Activated CD8-positive, alpha-beta T cell treated with anti-CD3 and anti-CD28 coated beads, Interleukin-2, amount 10 ng/mL, durations not matched to agents 7 days and 5 days (primary cell): ENCODE measurements at regions of chr9 and their contacts with region 1.

Region 1: GRCh38 chr9:121187636-121188305 is 13.9 kb downstream of the RAB14 start:
- DNase-seq: no peak
- ATAC-seq: no peak
- H3K4me3 Mint-ChIP-seq: no peak overlapping the region
- H3K27ac Mint-ChIP-seq: no peak overlapping the region
- H3K4me1 Mint-ChIP-seq: peaks cover 47% of the 10 kb centered on the region
- H3K27me3 Mint-ChIP-seq: no peaks in the 10 kb centered on the region

Region 2: GRCh38 chr9:121201738-121202533 is 14.2 kb after region 1 on chr9 and contains the start of gene RAB14:
- CTCF ChIA-PET with region 1: interaction called, 4 read pairs
- POLR2A ChIA-PET with region 1: interaction called, 14 read pairs
- DNase-seq: peak; percentile 100
- ATAC-seq: peak; percentile 89
- H3K4me3 Mint-ChIP-seq: peak within 1 kb of the TSS; percentile 96
- H3K27ac Mint-ChIP-seq: peak within 1 kb of the TSS; percentile 95
- H3K4me1 Mint-ChIP-seq: peaks cover 55% of the 10 kb centered on the region
- H3K27me3 Mint-ChIP-seq: no peaks in the 10 kb centered on the region
- total RNA-seq, gene RAB14: 56.7 to 68.2 TPM